Astrocyte of the cerebellum (primary cell): ENCODE measurements at regions of chr2 and their contacts with region 1.

Region 1: GRCh38 chr2:202025816-202026215 is 7.8 kb upstream of the FZD7 start:
- DNase-seq: no peak
- H3K4me3 ChIP-seq: no peak overlapping the region
- CTCF ChIP-seq: no peak

Region 2: DNA sequence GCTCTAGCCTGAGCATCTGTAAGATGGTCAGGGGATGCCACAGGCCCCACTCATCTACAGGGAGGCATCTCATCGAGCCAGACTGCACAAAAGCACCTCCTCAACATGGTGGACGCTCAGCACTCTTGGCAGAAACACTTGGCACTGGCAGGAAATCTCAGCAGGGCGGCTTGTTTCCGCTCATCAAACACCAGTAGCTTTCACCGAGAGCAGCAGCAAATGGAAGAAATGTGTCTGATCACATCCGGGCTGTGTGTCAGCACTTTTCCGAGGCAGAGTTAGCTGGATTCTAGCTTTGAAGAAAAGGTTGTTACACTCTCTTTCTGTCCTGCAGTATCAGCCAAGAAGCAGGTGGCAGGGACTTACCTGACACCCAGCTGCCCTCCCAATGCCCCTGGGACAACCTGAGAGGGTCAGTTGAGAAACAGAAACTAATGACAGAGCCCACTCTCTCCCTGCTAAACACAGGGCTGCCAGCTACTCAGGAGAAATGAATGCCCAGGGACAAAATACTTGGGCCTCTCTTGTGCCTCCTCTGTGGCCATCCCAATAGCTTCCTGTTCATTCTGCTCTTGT is 61.1 kb before region 1 on chr2:
- in situ Hi-C with region 1: loop called (anchors 5 kb)
- DNase-seq: peak; percentile 76
- H3K4me3 ChIP-seq: no peak overlapping the region
- CTCF ChIP-seq: no peak

Region 3: DNA sequence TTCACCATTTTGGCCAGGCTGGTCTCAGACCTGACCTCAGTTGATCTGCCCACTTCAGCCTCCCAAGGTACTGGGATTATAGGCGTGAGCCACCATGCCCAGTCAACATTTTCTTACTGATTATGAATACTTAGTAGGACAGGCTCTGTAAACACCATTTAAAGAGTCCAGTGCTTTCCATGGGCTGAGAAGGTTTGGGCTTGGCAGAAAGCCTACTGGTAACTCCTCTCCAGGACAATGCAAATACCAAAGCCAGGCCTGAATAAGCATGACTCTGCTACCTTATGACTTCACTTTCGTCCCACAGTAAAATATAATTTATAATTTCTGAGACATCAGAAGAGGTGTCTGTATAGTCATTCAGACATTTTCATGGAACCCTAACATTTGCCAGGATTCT is 548.7 kb after region 1 on chr2:
- in situ Hi-C with region 1: no loop called
- DNase-seq: no peak
- H3K4me3 ChIP-seq: no peak overlapping the region
- CTCF ChIP-seq: no peak